GM10248 (cell line): ENCODE measurements at regions of chr16 and their contacts with region 1.

Region 1: GRCh38 chr16:47258874-47259461 is 115.2 kb upstream of the NETO2 start:
- DNase-seq: peak; percentile 29
- CTCF ChIP-seq: peak; percentile 33

Region 2: DNA sequence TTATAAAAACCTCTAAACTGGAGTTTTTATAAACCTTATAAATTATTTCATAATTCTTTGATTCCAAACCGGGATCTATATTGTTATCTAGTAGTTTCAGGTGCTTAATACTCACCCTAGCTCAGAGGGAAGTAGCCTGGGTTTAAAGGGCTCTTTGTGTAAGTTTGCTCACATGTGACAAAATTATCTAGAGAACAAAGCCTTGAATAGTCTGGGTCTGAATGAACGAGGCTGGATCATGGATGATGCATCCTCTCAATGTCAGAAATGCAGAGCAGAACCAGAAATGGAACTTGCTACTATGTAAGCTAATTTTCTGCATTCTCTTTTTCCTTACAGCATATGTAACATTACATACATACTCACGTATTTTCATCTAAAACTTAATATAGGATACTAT is 11.3 kb before region 1 on chr16:
- CTCF ChIA-PET with region 1: interaction called, 12 read pairs
- POLR2A ChIA-PET with region 1: interaction called, 3 read pairs
- DNase-seq: no peak
- CTCF ChIP-seq: no peak